Heart left ventricle (tissue), 16 donors: ENCODE measurements at regions of chr2 and their contacts with region 1.

Region 1: DNA sequence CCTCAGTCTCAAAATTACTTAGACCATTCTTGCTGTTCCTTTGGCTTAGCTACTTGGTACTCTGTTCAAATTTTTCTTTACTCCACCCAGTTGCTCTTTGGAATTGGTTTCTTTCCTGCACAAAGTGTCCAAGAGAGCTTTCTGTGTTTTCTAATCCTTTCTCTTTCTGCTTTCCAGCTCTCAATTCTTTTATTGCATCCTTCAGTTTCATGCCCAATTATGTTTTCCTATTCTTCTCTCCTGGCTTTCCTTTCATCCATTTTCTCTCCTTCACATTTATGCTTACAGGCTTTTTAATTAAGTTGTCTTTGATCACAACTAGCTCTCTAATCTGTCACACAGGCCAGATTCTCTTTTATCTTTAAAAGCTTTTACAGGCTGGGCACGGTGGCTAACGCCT is 38.2 kb downstream of the UBR3 start:
- DNase-seq: no peak
- ATAC-seq: no peak
- H3K4me3 ChIP-seq: no peak overlapping the region
- H3K27ac ChIP-seq: no peak overlapping the region
- H3K4me1 ChIP-seq: peaks cover 0 to 41% (median 20%) of the 10 kb centered on the region in 12 donors
- H3K27me3 ChIP-seq: no peaks in the 10 kb centered on the region
- CTCF ChIP-seq: no peak
- POLR2A ChIP-seq: no peak

Region 2: DNA sequence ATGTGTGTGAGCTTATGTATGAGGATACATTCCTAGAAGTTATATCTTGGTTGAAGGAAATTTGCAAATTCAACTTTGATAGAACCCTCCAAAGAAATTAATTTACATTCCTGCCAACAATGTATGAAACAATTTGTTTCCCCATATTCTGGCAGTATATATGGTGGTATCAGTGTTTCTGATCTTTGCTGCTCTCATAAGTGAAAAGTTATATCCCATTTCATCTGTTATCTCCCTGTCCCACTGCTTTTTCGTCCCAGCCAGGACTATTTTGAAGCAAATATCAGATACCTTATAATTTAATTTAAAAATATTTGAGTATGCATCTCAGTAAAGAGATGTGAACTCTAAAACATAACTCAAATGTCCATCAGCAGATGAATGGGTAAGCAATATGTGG is 31.1 kb before region 1 on chr2:
- intact Hi-C with region 1: loop called in 4 of 10 experiments (anchors 1 to 10 kb)
- DNase-seq: no peak
- ATAC-seq: no peak
- H3K4me3 ChIP-seq: no peak overlapping the region
- H3K27ac ChIP-seq: no peak overlapping the region
- H3K4me1 ChIP-seq: peaks cover under 1 to 87% (median 44%) of the 10 kb centered on the region in 12 donors
- H3K27me3 ChIP-seq: no peaks in the 10 kb centered on the region
- CTCF ChIP-seq: no peak
- POLR2A ChIP-seq: no peak

Region 3: GRCh38 chr2:169839954-169840746 is 25.3 kb before region 1 on chr2:
- intact Hi-C with region 1: loop called in 1 of 10 experiments (anchors 1 kb)
- DNase-seq: no peak
- ATAC-seq: peak; percentile 32 to 78 (median 61)
- H3K4me3 ChIP-seq: peak overlapping the region in 4 of 12 donors; percentile 18 to 34 (median 24)
- H3K27ac ChIP-seq: peak overlapping the region in 10 of 12 donors; percentile 27 to 79 (median 46)
- H3K4me1 ChIP-seq: peaks cover 6 to 60% (median 35%) of the 10 kb centered on the region in 12 donors
- H3K27me3 ChIP-seq: no peaks in the 10 kb centered on the region
- CTCF ChIP-seq: no peak
- POLR2A ChIP-seq: no peak

Region 4: GRCh38 chr2:170247882-170248393 is 382.4 kb after region 1 on chr2:
- intact Hi-C with region 1: no loop called
- DNase-seq: no peak
- ATAC-seq: no peak
- H3K4me3 ChIP-seq: no peak overlapping the region
- H3K27ac ChIP-seq: no peak overlapping the region
- H3K4me1 ChIP-seq: no peaks in the 10 kb centered on the region
- H3K27me3 ChIP-seq: peaks cover 0 to 15% (median 3%) of the 10 kb centered on the region in 9 donors
- CTCF ChIP-seq: no peak
- POLR2A ChIP-seq: no peak